ENCODE measurements at regions of chr3 and their contacts with region 1.

Region 1: DNA sequence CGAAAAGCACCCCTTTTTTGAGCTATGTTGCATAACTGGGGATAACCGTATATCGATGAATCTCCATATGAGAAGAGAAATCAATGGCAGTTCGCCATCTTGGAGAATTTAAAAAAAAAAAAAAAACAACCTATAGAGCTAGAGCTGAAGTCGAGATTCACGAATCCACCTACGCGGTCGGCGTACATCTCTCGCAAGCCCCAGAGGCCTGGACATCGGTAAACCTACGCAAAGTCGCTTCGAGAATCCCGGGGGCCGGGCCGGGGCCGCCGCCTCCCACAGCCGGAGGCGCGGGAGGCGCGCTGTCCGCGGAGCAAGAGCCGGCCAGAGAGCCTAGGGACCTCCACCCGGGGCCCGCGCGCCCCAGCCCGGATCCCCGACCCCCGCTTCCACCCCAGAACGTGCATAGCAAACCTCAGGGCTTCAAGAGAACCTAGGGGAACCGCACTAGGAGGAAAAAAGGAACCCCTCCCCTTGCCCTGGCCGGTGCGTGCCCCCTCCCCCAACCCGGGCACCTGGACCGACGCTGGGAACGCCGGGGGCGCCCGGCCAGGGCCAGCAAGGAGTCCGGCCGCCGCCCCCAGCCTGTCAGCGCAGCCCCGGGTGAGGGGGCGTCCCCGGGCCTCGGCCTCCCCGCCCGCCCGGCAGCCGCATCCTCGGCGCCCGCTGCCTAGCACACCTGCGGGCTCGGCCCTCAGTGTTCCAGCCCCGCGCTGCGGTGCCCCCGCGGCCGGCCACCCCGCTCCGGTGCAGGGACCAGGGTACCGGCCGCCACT is 567 bp downstream of the PFN2 start:
- DNase-seq: no peak
- ATAC-seq: peak; percentile 69
- H3K4me3 ChIP-seq: peak overlapping the region; percentile 83 to 86
- H3K27ac ChIP-seq: peak overlapping the region; percentile 100
- H3K4me1 ChIP-seq: peaks cover 35% of the 10 kb centered on the region
- H3K27me3 ChIP-seq: no peaks in the 10 kb centered on the region
- CTCF ChIP-seq: no peak

Region 2: GRCh38 chr3:149879872-149880271 is 90.3 kb before region 1 on chr3:
- CTCF ChIA-PET with region 1: no interaction called
- POLR2A ChIA-PET with region 1: no interaction called
- in situ Hi-C with region 1: no loop called
- intact Hi-C with region 1: no loop called
- DNase-seq: peak; percentile 41
- ATAC-seq: peak; percentile 90
- H3K4me3 ChIP-seq: no peak overlapping the region
- H3K27ac ChIP-seq: no peak overlapping the region
- H3K4me1 ChIP-seq: no peaks in the 10 kb centered on the region
- H3K27me3 ChIP-seq: no peaks in the 10 kb centered on the region
- CTCF ChIP-seq: peak; percentile 76; the same call in 1 of the 2 replicates

Region 3: GRCh38 chr3:150079029-150079739 is 109.1 kb after region 1 on chr3:
- CTCF ChIA-PET with region 1: interaction called, 4 read pairs
- POLR2A ChIA-PET with region 1: no interaction called
- in situ Hi-C with region 1: no loop called
- intact Hi-C with region 1: loop called (anchors 2 kb)
- DNase-seq: no peak
- ATAC-seq: peak; percentile 25
- H3K4me3 ChIP-seq: no peak overlapping the region
- H3K27ac ChIP-seq: peak overlapping the region; percentile 80
- H3K4me1 ChIP-seq: peaks cover 56% of the 10 kb centered on the region
- H3K27me3 ChIP-seq: no peaks in the 10 kb centered on the region
- CTCF ChIP-seq: no peak

Region 4: GRCh38 chr3:150183678-150184425 is 213.7 kb after region 1 on chr3:
- CTCF ChIA-PET with region 1: interaction called, 31 read pairs
- POLR2A ChIA-PET with region 1: interaction called, 3 read pairs
- in situ Hi-C with region 1: no loop called
- intact Hi-C with region 1: loop called (anchors 1 kb)
- DNase-seq: peak; percentile 68
- ATAC-seq: peak; percentile 99
- H3K4me3 ChIP-seq: peak overlapping the region; percentile 42 to 59
- H3K27ac ChIP-seq: peak overlapping the region; percentile 81
- H3K4me1 ChIP-seq: peaks cover 15% of the 10 kb centered on the region
- H3K27me3 ChIP-seq: no peaks in the 10 kb centered on the region
- CTCF ChIP-seq: peak; percentile 90

Region 5: DNA sequence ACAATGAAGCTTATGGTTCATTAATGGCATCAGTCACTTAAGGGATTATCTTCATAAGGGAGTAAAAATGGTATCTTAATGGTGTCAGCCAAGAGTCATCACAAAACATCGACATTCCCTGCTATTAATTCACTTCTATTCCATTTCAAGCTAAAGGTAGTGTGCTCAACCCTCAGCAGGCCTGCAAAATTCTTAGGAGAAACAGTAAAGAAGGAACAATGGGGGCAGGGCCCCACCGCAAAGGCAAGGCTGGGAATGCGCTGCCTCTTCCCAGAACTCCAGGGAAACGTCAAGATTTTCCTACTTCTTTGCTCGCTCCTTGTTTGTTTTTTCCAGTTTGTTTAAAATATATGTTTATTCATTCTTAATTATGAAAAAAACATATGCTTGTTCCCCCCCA is 250.7 kb after region 1 on chr3:
- CTCF ChIA-PET with region 1: interaction called, 6 read pairs
- POLR2A ChIA-PET with region 1: no interaction called
- in situ Hi-C with region 1: no loop called
- intact Hi-C with region 1: loop called (anchors 1 kb)
- DNase-seq: no peak
- ATAC-seq: no peak
- H3K4me3 ChIP-seq: peak overlapping the region; percentile 35 to 40
- H3K27ac ChIP-seq: peak overlapping the region; percentile 65
- H3K4me1 ChIP-seq: 0 out of 2 replicates have a peak, but pooled peaks cover 4% of the 10 kb centered on the region
- H3K27me3 ChIP-seq: no peaks in the 10 kb centered on the region
- CTCF ChIP-seq: no peak

Region 6: GRCh38 chr3:150521463-150521862 is 551.3 kb after region 1 on chr3:
- CTCF ChIA-PET with region 1: no interaction called
- POLR2A ChIA-PET with region 1: no interaction called
- in situ Hi-C with region 1: no loop called
- intact Hi-C with region 1: no loop called
- DNase-seq: no peak
- ATAC-seq: 0 out of 2 replicates have a peak, but pooled peaks have one; percentile 59
- H3K4me3 ChIP-seq: no peak overlapping the region
- H3K27ac ChIP-seq: no peak overlapping the region
- H3K4me1 ChIP-seq: peaks cover 4% of the 10 kb centered on the region; the same call in 1 of the 2 replicates
- H3K27me3 ChIP-seq: no peaks in the 10 kb centered on the region
- CTCF ChIP-seq: peak; percentile 27; the same call in 1 of the 2 replicates

Region 7: DNA sequence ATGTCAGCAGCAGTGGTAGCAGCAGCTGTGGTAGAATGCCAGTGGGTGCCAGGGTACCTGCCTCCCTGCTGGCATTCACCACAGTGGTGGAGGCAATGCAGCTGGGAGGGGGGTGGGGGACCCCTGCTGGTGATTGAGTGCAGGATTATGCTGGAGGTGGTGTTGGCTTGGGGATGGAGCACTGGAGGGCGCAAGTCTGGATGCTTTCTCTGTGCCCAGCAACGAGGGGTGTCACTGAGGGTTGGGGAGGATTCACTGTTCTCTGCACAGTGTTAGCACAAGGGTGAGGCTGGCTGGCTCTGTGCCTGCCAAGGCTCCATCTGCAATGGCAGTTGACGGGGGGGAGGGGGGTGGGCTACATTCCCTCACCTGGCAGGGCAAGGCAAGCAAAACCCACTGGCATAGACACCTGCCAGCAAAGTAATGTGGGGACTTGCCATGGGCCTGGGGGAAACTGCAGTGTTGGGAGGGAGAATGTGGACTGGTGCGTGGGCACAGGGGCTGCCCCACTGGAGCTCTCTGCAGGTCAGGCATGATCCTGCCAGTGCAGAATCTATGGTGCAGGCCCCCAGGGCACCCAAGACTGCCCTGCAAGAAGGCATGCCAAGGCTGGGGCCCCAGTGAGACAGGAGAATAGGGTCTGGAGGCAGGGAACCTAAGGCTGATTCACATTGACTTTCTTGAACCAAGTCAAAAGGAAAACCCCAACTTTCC is 870.8 kb after region 1 on chr3:
- CTCF ChIA-PET with region 1: no interaction called
- POLR2A ChIA-PET with region 1: no interaction called
- in situ Hi-C with region 1: no loop called
- intact Hi-C with region 1: no loop called
- DNase-seq: no peak
- ATAC-seq: 0 out of 2 replicates have a peak, but pooled peaks have one; percentile 30
- H3K4me3 ChIP-seq: no peak overlapping the region
- H3K27ac ChIP-seq: no peak overlapping the region
- H3K4me1 ChIP-seq: no peaks in the 10 kb centered on the region
- H3K27me3 ChIP-seq: peaks cover 16% of the 10 kb centered on the region; the same call in 1 of the 2 replicates
- CTCF ChIP-seq: no peak

Region 8: DNA sequence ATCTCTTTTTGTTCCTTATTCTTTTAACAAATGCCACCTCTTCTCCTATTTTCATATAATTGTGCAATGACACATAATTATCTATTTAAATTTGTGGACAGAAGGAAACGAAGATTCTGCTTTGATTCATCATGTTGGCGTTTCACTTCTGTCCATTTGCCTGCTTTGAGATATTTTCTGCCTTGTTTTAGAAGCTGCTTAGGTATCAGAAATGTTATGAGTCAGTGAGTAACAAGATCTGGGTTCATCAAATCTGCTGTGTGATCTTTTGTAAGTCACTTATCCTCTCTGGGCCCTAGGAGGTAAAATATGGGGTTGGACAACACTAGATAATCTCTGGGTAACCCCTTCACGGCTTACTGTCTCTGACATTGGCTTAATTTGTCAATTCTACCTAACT is 942.4 kb after region 1 on chr3:
- CTCF ChIA-PET with region 1: no interaction called
- POLR2A ChIA-PET with region 1: no interaction called
- in situ Hi-C with region 1: no loop called
- intact Hi-C with region 1: no loop called
- DNase-seq: no peak
- ATAC-seq: no peak
- H3K4me3 ChIP-seq: no peak overlapping the region
- H3K27ac ChIP-seq: no peak overlapping the region
- H3K4me1 ChIP-seq: no peaks in the 10 kb centered on the region
- H3K27me3 ChIP-seq: peaks cover 44% of the 10 kb centered on the region
- CTCF ChIP-seq: no peak

Measured in Panc1 (cell line).